ENCODE measurements at regions of chr4 and their contacts with region 1.

Region 1: DNA sequence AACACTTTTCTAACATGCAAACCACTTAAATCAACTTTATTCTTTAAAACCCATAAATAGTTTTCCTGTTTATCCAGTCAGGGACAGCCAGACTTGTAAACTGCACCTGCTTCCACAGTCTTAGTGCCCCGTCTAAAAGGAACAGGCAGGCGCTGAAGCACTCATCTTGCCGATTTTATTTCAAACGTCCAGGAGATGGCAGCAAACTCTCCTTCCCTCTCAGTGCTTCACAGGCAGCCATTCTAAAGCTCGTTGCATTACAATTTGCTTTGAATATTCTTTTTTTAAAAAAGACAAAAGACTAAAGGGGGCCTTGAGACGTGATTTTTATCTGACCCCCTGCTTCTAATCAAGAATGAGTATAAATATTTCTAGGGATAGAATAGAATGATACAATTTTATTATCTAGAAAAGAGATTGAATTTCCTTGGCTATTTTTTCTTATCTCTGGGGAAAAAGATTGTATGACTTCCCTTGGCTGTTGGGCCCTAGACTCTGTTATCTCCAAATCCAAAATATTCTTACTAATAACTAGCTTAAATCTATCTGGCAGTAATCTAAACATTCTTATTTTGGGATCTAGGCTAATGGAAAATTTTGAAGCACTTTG is 93.6 kb upstream of the MYOZ2 start:
- DNase-seq: peak; percentile 58 to 63 (median 61)
- H3K4me3 ChIP-seq: no peak overlapping the region
- H3K4me3 Mint-ChIP-seq: no peak overlapping the region
- H3K27ac ChIP-seq: no peak overlapping the region
- H3K27ac Mint-ChIP-seq: no peak overlapping the region
- H3K4me1 ChIP-seq: no peaks in the 10 kb centered on the region
- H3K4me1 Mint-ChIP-seq: no peaks in the 10 kb centered on the region
- H3K27me3 ChIP-seq: no peaks in the 10 kb centered on the region
- H3K27me3 Mint-ChIP-seq: peaks cover 0 to 1% of the 10 kb centered on the region in 2 donors

Region 2: DNA sequence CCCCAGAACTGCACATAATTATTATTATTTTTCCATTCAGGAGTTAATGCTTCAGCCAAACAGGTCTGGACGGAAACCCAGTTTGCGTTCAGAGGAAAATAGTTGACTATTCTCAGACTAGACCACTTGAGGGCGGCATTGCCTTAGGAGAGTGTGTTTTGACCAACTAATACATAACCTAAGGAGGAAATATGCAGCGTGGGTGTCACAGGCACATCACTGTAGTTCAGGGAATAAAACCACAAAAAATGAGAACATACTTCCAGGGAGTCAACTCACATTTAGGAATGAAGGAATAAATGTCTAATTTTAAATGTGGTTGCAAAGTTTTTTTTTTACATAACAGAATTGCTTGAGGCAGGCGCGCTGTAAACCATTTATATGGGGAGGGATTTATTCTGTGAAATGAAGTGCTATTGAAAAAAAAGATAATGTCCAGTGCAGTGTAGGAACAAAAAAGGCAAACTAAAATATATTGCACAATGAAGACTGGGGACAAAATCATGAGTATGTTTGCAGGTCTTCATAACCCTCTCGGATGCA is 60.1 kb before region 1 on chr4:
- CTCF ChIA-PET with region 1: interaction called, 3 read pairs
- POLR2A ChIA-PET with region 1: no interaction called
- intact Hi-C with region 1: loop called (anchors 1 kb)
- DNase-seq: peak; percentile 42 to 53 (median 52)
- H3K4me3 ChIP-seq: no peak overlapping the region
- H3K4me3 Mint-ChIP-seq: no peak overlapping the region
- H3K27ac ChIP-seq: no peak overlapping the region
- H3K27ac Mint-ChIP-seq: no peak overlapping the region
- H3K4me1 ChIP-seq: no peaks in the 10 kb centered on the region
- H3K4me1 Mint-ChIP-seq: no peaks in the 10 kb centered on the region
- H3K27me3 ChIP-seq: no peaks in the 10 kb centered on the region
- H3K27me3 Mint-ChIP-seq: peaks cover 3 to 5% of the 10 kb centered on the region in 2 donors

Region 3: DNA sequence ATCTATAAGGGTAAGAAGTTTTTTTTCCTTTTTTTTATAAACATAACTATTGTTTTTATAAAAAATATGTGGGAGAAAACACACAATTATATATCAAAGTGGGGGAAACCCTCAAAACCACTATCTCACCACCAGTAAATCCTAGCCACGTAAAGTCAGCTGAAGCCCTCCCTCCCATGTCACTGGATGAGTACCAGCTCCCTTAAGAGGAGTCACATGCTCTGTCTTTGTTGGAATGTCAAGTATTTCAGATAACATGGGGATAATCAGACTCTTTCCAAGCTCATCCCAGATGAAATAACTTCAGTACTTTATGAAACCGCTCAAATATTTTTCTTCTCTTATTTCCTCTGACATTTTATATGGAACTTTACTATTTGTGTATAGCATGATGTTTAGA is 96.0 kb after region 1 on chr4:
- CTCF ChIA-PET with region 1: interaction called, 22 read pairs
- POLR2A ChIA-PET with region 1: no interaction called
- intact Hi-C with region 1: loop called (anchors 5 kb)
- DNase-seq: peak in 1 of 5 donors; percentile 17
- H3K4me3 ChIP-seq: no peak overlapping the region
- H3K4me3 Mint-ChIP-seq: peak overlapping the region in 6 of 8 donors; percentile 14 to 80 (median 44)
- H3K27ac ChIP-seq: no peak overlapping the region
- H3K27ac Mint-ChIP-seq: peak overlapping the region in 6 of 7 donors; percentile 12 to 86 (median 54)
- H3K4me1 ChIP-seq: peaks cover 36% of the 10 kb centered on the region
- H3K4me1 Mint-ChIP-seq: peaks cover 36 to 44% (median 39%) of the 10 kb centered on the region in 4 donors
- H3K27me3 ChIP-seq: no peaks in the 10 kb centered on the region
- H3K27me3 Mint-ChIP-seq: peaks cover 0 to 1% of the 10 kb centered on the region in 2 donors

Region 4: DNA sequence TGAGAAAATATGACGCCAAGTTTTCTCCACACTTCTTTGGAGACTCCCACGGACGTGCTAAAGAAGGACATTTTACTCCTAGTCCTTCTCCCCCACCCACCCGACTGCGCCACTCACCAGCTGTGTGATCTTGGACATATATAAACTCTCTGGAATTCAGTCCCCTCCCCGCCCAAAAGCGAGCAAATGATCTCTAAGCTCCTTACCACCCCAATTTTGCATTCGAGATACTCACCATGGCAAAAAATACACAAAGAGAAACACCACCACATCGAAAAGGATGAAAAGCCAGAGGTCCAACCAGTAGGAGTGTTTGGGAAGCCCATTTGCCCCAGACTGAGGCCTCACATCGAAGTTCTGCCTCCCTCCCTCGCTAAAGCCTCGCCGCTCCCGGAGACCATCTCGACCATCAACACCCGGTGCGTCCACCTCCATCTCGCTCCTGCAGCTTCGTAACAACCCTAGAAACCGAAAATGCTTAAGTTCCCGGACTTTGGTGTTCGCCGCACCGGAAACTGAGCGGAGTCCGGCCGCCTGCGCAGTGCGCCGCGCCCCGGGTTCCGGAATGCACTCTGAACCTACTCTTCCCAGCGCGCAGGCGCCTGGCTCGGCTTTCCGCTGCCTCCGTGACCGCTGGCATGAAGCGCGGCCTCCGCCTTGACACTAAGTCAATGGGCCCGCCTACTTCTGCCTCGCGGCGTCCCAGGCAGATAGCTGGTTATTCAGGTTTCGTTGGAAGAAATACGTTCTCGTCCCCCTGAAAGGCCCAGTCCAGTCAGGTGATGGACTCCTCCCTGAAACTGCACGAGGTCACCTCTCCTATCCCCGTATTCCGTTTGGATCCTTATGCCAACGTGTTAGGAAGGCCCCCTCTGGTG is 258.3 kb after region 1 on chr4:
- CTCF ChIA-PET with region 1: interaction called, 34 read pairs
- POLR2A ChIA-PET with region 1: interaction called, 4 read pairs
- intact Hi-C with region 1: no loop called
- DNase-seq: peak; percentile 88 to 91 (median 90)
- H3K4me3 ChIP-seq: peak overlapping the region; percentile 95 to 99
- H3K4me3 Mint-ChIP-seq: peak overlapping the region; percentile 95 to 100 (median 98)
- H3K27ac ChIP-seq: peak overlapping the region; percentile 92
- H3K27ac Mint-ChIP-seq: peak overlapping the region; percentile 96 to 100 (median 99)
- H3K4me1 ChIP-seq: peaks cover 27% of the 10 kb centered on the region
- H3K4me1 Mint-ChIP-seq: peaks cover 24 to 42% (median 34%) of the 10 kb centered on the region in 4 donors
- H3K27me3 ChIP-seq: no peaks in the 10 kb centered on the region
- H3K27me3 Mint-ChIP-seq: no peaks in the 10 kb centered on the region

Region 5: GRCh38 chr4:119490335-119490734 is 448.3 kb after region 1 on chr4:
- CTCF ChIA-PET with region 1: interaction called, 3 read pairs
- POLR2A ChIA-PET with region 1: no interaction called
- intact Hi-C with region 1: loop called (anchors 5 kb)
- DNase-seq: no peak
- H3K4me3 ChIP-seq: no peak overlapping the region
- H3K4me3 Mint-ChIP-seq: no peak overlapping the region
- H3K27ac ChIP-seq: no peak overlapping the region
- H3K27ac Mint-ChIP-seq: no peak overlapping the region
- H3K4me1 ChIP-seq: no peaks in the 10 kb centered on the region
- H3K4me1 Mint-ChIP-seq: no peaks in the 10 kb centered on the region
- H3K27me3 ChIP-seq: no peaks in the 10 kb centered on the region
- H3K27me3 Mint-ChIP-seq: no peaks in the 10 kb centered on the region